PC-9 (cell line): ENCODE measurements at regions of chr16 and their contacts with region 1.

Region 1: GRCh38 chr16:69071036-69071435 is 34.4 kb upstream of the HAS3 start:
- DNase-seq: no peak
- H3K4me3 ChIP-seq: no peak overlapping the region
- H3K27ac ChIP-seq: peak overlapping the region; percentile 24; the same call in 1 of the 2 replicates
- H3K4me1 ChIP-seq: peaks cover 44% of the 10 kb centered on the region
- H3K27me3 ChIP-seq: no peaks in the 10 kb centered on the region
- CTCF ChIP-seq: no peak

Region 2: DNA sequence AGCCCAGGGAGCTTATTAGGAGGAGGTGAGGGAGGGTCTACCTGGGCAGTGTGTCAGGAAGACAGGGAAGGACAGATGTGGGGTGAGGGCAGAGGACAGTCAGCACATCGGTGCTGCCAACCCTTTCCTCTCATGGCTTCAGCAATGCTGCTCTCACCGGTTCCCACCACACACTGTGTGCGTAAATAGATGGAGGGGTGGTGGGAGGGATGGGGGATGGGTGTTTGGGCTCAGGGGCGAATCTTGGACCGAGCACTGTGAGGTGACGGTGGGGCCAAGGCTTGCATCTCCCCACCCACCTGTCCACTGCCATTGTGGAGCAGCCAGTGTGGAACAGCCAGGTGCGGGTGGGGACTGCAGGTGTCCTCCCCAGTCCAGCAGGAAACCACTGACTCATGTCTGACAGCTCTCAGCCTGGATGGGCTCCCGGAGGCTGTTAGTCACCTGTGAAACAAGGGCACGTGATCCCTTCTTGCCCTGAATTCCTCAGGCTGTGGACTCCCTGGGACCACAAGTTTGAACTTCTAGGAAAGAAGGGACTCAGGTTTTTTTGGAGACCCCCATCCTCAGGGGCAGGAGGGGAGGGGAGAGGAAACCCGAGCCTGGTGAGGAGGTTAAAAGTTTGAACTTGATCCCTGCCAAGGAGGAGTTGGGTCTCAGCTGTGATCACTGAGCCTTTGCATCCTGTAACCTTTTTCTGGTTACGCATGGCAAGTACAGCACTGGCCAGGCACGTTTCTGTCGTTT is 580.0 kb before region 1 on chr16:
- CTCF ChIA-PET with region 1: no interaction called
- POLR2A ChIA-PET with region 1: no interaction called
- intact Hi-C with region 1: no loop called
- DNase-seq: peak; percentile 82 to 89
- H3K4me3 ChIP-seq: no peak overlapping the region
- H3K27ac ChIP-seq: peak overlapping the region; percentile 9; the same call in 1 of the 2 replicates
- H3K4me1 ChIP-seq: peaks cover 38% of the 10 kb centered on the region
- H3K27me3 ChIP-seq: no peaks in the 10 kb centered on the region
- CTCF ChIP-seq: no peak

Region 3: DNA sequence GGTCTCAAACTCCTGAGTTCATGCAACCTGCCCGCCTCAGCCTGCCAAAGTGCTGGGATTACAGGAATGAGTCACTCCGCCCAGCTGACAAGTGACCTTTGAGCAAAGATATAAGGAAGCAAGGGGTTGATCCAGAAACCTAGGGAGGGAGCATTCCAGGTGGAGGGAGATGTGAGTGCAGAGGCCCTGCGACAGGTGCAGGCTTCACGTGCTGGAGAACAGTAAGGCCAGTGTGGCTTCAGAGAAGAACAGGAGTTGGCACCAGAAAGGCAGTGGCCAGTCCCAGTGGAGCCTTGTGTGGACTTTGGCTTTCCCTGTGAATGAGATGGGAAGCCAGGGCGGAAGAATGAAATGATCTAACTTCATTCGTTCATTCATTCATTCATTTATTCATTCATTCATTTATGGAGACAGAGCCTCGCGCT is 39.1 kb before region 1 on chr16:
- CTCF ChIA-PET with region 1: interaction called, 12 read pairs
- POLR2A ChIA-PET with region 1: no interaction called
- intact Hi-C with region 1: no loop called
- DNase-seq: peak; percentile 31 to 67
- H3K4me3 ChIP-seq: no peak overlapping the region
- H3K27ac ChIP-seq: no peak overlapping the region
- H3K4me1 ChIP-seq: peaks cover 9% of the 10 kb centered on the region; the same call in 1 of the 2 replicates
- H3K27me3 ChIP-seq: no peaks in the 10 kb centered on the region
- CTCF ChIP-seq: no peak